Naive thymus-derived CD8-positive, alpha-beta T cell (primary cell): ENCODE measurements at regions of chr12 and their contacts with region 1.

Region 1: GRCh38 chr12:123120452-123121166 is 30.3 kb downstream of the PITPNM2 start:
- DNase-seq: peak in 5 of 10 donors; percentile 23 to 77 (median 55)
- ATAC-seq: peak; percentile 61 to 79
- H3K4me3 Mint-ChIP-seq: peak overlapping the region; percentile 44 to 82 (median 66)
- H3K27ac Mint-ChIP-seq: peak overlapping the region; percentile 92 to 97 (median 96)
- H3K4me1 Mint-ChIP-seq: peaks cover 42 to 75% (median 73%) of the 10 kb centered on the region in 4 donors
- H3K27me3 Mint-ChIP-seq: no peaks in the 10 kb centered on the region

Region 2: DNA sequence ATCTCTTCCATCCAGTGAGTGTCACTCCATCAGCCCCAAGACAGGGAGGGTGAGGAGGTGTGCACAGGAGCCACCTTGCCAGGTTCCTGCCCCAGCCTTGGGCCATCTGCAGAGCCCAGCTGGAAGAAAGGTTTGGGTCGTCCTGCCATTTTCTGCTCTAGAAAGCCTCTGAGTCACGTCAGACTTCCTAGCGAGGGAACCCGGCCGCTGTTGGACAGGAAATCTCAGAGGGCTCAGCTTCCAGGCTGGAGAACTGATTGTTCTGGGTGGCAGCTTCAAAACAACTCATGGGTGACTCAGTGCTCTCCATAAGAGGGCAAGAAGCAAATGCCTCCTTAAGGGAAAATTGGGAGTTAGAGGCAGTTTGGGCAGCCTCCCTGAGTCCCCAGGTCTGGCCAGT is 268.8 kb before region 1 on chr12:
- POLR2A ChIA-PET with region 1: no interaction called
- DNase-seq: no peak
- ATAC-seq: no peak
- H3K4me3 Mint-ChIP-seq: no peak overlapping the region
- H3K27ac Mint-ChIP-seq: no peak overlapping the region
- H3K4me1 Mint-ChIP-seq: no peaks in the 10 kb centered on the region
- H3K27me3 Mint-ChIP-seq: no peaks in the 10 kb centered on the region

Region 3: DNA sequence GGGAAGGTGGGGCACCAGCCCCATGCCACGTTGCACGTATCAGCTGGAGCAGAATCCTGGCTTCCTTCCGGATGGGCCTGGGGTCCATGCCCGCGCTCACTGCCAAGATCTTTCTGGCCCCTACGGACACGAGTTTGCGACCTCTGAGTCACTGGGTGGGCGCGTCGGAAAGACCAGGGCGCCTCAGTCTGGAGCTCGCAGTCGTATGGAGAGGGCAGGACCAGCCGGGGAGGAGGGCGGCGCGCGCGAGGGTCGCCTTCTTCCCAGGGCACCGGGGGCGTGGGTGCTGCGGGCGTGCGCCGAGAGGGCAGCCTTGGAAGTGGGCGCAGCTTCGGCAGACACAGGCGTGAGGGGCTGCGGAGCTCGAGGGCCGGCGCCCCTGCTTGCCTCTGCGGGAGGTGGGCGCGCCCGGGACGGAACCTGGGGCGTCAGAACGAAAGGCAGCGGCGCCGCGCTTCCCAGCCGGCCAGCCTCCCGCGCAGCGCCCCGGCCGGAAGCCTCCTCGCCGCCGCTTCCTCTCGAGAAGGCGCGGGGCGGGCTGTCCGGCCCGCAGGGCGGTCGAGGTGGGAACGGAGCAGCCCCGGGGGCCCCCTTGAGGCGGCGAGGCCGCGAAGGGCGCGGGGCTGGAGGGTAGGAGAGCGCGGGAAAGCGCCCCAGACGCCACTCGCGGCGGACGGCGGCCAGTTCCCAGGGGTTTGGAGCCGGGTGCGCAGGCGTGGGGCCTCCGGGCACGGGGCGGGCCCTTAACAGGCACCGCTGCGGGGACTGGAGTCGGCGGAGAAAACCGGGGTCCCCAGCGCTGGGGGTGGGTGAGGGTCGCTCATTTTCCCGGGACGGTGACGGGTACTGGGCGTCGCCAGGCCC is 140.2 kb before region 1 on chr12 and contains the start of gene ARL6IP4:
- POLR2A ChIA-PET with region 1: interaction called, 10 read pairs
- DNase-seq: peak; percentile 42 to 79 (median 60)
- ATAC-seq: peak; percentile 78
- H3K4me3 Mint-ChIP-seq: peak within 1 kb of the TSS; percentile 85 to 92 (median 89)
- H3K27ac Mint-ChIP-seq: peak within 1 kb of the TSS; percentile 75 to 93 (median 90)
- H3K4me1 Mint-ChIP-seq: peaks cover 24 to 80% (median 68%) of the 10 kb centered on the region in 4 donors
- H3K27me3 Mint-ChIP-seq: no peaks in the 10 kb centered on the region
- polyA plus RNA-seq, gene ARL6IP4: 209 to 256 (median 222) TPM

Region 4: DNA sequence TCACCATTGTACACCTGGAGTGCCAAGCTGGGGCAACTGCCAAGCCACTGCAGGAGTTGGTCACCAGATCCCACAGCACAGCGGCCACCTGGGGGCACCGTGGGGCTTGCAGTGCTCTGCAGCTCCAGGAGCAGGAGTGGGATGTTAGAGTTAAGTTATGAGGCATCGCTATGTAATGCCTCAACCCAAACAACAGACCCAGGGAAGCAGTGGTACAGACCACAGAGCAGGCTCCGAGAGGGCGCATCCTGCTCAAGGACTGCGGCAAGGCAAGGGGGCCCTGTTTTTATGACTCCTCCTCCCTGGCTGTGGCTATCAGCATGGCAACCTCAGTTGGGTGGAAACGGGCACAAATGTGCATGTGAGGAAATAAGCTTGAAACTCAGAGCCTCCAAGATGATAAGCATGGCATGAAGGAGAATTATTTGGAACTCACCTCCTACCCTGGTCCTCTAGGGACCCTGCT is 77.0 kb before region 1 on chr12:
- POLR2A ChIA-PET with region 1: interaction called, 11 read pairs
- DNase-seq: peak; percentile 42 to 89 (median 70)
- ATAC-seq: peak; percentile 98 to 99
- H3K4me3 Mint-ChIP-seq: peak overlapping the region in 9 of 10 donors; percentile 11 to 77 (median 65)
- H3K27ac Mint-ChIP-seq: peak overlapping the region; percentile 88 to 99 (median 94)
- H3K4me1 Mint-ChIP-seq: peaks cover 29 to 50% (median 47%) of the 10 kb centered on the region in 4 donors
- H3K27me3 Mint-ChIP-seq: no peaks in the 10 kb centered on the region

Region 5: DNA sequence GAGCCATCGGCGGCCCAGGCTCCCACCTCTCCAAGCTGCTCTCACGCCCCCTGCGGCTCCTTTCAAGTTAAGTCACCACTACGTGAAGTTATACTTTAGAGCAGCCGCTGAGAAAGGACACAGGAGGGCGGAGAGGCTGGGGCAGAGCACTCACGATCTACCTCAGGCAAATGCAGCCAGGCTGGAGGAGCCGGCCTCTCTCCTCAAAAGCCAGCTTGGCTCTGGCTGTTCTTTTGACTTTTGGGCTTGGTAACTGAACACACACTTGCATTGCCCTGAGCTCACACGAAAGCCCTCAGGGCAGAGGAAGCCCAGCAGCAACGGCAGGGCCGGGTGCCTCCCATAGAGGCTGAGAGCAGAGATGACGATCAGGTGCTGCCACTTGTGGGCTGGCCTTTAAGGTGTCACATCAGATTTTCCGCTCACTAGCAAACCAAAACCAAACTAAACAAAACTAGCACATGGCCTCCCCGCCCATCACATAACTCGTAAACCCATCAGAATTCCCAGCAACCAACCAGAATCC is 44.9 kb before region 1 on chr12:
- POLR2A ChIA-PET with region 1: interaction called, 30 read pairs
- DNase-seq: peak; percentile 45 to 88 (median 73)
- ATAC-seq: peak; percentile 82 to 89
- H3K4me3 Mint-ChIP-seq: peak overlapping the region; percentile 82 to 98 (median 94)
- H3K27ac Mint-ChIP-seq: peak overlapping the region; percentile 94 to 99 (median 96)
- H3K4me1 Mint-ChIP-seq: peaks cover 35 to 78% (median 72%) of the 10 kb centered on the region in 4 donors
- H3K27me3 Mint-ChIP-seq: no peaks in the 10 kb centered on the region

Region 6: DNA sequence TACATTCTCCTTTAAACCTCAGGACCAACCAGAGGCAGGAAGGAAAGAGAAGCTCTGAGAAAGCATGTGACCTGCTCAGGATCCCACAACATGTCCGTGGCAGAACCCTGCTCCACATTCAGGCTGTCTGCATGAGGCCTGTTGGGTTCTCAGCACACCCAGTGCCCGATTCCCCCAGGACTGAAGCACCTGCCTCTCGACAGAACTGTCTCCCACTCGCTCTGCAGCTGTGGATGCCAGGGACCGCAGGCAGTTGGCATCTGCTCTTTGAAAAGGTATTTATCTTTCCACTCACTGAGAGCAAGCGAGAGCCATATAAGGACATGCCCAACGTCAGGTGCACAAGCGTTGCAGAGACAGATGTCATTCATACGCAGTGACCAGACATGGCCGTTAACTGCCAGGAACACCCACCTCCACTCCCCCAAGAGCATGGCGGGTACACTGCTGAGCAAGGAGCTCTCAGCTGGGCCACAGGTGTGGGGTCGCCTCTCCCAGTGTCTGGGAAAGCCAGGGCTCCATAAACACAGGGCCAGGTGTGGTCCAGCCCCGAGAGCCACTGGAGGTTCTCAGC is 11.4 kb after region 1 on chr12:
- POLR2A ChIA-PET with region 1: interaction called, 56 read pairs
- DNase-seq: peak; percentile 17 to 79 (median 61)
- ATAC-seq: peak; percentile 95 to 96
- H3K4me3 Mint-ChIP-seq: peak overlapping the region; percentile 64 to 88 (median 76)
- H3K27ac Mint-ChIP-seq: peak overlapping the region; percentile 89 to 97 (median 94)
- H3K4me1 Mint-ChIP-seq: peaks cover 12 to 56% (median 48%) of the 10 kb centered on the region in 4 donors
- H3K27me3 Mint-ChIP-seq: no peaks in the 10 kb centered on the region

Region 7: DNA sequence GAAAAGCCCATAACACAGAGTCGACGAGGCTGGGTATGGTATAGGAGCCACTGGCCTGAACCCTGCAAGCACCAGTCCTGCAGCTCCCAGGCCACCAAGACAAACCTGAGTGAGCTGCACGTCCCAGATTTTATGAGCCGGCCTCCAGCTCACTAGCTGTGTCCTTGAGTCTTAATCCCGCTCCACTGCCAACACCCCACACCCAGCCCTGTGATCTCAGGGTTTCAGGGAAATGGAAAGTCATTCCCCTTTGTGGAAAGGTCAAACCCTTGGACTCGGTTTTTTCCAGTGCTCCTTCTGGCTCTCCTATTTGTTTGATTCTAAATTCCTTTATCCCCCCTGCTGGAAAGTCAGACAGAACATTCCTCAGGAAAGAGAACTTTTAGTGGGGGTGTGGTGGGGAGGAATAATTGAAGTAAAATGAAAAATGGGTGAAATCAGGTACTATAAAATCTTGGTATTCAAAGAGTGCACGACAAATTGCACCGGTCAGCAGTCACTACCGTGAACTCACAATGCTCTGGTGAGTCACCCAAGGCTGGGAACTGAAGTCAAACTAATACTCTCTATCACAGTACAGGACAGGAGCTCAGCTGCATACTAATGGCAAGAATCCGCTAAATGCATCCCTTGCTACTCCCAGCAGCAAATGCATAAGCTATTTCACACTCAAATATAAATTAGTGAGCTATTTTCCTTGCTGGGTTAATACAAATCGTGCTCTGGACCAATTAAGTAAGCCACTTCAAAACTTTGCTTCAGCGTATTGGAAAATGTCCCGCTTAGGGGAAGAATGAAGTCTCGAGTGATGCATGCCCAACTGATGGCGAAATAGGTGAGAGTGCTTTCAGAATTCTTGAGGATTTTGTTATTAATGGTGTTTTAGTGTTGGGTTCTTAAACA is 21.3 kb after region 1 on chr12:
- POLR2A ChIA-PET with region 1: interaction called, 10 read pairs
- DNase-seq: no peak
- ATAC-seq: no peak
- H3K4me3 Mint-ChIP-seq: peak overlapping the region in 1 of 10 donors; percentile 45
- H3K27ac Mint-ChIP-seq: peak overlapping the region in 5 of 10 donors; percentile 25 to 73 (median 48)
- H3K4me1 Mint-ChIP-seq: peaks cover 29 to 60% (median 47%) of the 10 kb centered on the region in 4 donors
- H3K27me3 Mint-ChIP-seq: no peaks in the 10 kb centered on the region

Region 8: DNA sequence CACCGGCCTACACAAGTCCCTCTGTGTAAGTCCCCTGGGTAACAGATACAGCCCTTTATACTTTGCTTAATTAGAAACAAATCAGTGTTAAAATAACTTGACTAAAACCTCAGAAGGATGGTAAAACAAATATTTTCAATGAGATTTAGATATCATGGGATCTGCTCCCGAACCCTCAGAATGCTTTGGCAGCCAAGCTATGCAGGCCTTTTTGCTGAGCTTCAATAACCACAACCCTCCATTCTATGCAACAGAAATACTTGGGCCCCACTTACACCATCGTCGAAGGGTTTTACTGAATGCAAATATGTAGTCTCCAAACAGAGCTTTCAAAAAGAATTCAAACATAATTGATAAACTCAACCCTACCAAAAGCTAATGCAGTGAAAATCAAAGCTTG is 59.6 kb after region 1 on chr12:
- POLR2A ChIA-PET with region 1: no interaction called
- DNase-seq: no peak
- ATAC-seq: no peak
- H3K4me3 Mint-ChIP-seq: no peak overlapping the region
- H3K27ac Mint-ChIP-seq: peak overlapping the region in 2 of 10 donors; percentile 7 to 24
- H3K4me1 Mint-ChIP-seq: peaks cover 0 to 4% (median under 1%) of the 10 kb centered on the region in 4 donors
- H3K27me3 Mint-ChIP-seq: no peaks in the 10 kb centered on the region

Region 9: GRCh38 chr12:123278101-123278627 is 157.6 kb after region 1 on chr12:
- POLR2A ChIA-PET with region 1: no interaction called
- DNase-seq: no peak
- ATAC-seq: no peak
- H3K4me3 Mint-ChIP-seq: no peak overlapping the region
- H3K27ac Mint-ChIP-seq: peak overlapping the region in 1 of 10 donors; percentile 7
- H3K4me1 Mint-ChIP-seq: peaks cover 0 to 8% (median 0%) of the 10 kb centered on the region in 4 donors
- H3K27me3 Mint-ChIP-seq: no peaks in the 10 kb centered on the region

Region 10: GRCh38 chr12:123398550-123399254 is 278.1 kb after region 1 on chr12:
- POLR2A ChIA-PET with region 1: no interaction called
- DNase-seq: no peak
- ATAC-seq: no peak
- H3K4me3 Mint-ChIP-seq: no peak overlapping the region
- H3K27ac Mint-ChIP-seq: peak overlapping the region in 1 of 10 donors; percentile 62
- H3K4me1 Mint-ChIP-seq: peaks cover 0 to 13% (median 9%) of the 10 kb centered on the region in 4 donors
- H3K27me3 Mint-ChIP-seq: no peaks in the 10 kb centered on the region